Right cardiac atrium (tissue), 5 donors: ENCODE measurements at regions of chr22 and their contacts with region 1.

Region 1: DNA sequence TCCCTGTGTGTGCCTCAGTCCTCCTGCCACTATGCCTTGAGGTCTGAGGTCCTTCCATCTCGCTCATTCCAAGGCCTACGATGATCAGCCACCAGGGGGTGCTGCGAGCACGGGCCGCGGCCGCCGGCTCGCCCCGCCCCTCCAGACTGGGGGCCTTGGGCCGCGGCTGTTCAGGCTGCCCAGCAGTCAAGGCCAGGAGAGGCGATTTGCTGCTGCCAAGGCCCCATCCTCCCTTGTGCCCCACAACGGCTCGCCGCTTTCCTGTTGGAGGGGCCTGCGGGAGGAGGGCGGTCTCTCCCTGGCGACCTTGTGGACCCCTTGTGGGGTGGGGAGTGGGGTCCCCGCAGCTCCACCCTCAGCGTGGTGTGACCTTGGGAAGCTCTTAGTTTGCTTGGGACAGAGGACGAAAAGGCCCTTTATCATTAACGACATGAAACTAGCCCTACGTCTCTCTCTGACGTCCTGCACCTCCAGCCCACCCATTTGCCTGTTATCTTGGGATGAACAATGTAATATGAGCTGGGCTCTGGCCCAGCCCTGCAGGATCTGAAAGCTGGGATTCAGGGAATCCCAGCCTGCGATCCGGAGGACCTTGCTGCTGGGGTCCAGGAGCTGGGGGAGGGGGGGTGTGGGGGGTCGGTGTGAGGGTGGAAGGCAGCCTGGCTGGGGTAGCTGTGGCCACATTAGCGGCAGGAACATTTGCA is 5.3 kb upstream of the GALR3 start:
- DNase-seq: peak; percentile 80 to 94 (median 94)
- ATAC-seq: peak; percentile 92
- H3K4me3 ChIP-seq: peak overlapping the region; percentile 46
- H3K27ac ChIP-seq: no peak overlapping the region
- H3K4me1 ChIP-seq: peaks cover 4% of the 10 kb centered on the region
- H3K27me3 ChIP-seq: no peaks in the 10 kb centered on the region

Region 2: DNA sequence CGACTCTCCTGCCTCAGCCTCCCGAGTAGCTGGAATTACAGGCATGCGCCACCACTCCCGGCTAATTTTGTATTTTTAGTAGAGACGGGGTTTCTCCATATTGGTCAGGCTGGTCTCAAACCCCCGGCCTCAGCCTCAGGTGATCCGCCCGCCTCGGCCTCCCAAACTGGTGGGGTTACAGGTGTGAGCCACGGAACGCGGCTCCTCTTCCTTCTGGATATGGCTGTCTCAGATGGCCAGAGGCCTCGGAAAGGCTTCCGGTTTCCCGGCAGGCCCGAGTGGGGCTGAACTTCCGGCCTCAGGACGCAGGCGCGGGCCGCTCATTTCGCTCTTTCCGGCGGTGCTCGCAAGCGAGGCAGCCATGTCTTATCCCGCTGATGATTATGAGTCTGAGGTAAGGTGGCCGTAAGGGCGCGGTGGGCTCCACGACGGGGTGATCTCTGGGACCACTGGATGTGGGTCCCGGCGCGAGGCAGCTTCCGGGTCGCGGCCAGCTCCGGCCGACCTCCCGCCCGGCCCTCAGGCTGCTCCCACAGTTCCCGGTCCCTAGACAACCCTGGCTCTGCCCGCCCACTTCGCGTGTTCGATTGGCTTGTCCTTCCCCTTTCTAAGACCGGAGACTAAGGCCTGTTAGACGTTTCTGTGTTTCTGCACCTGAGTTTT is 31.4 kb after region 1 on chr22 and contains the start of gene EIF3L:
- intact Hi-C with region 1: loop called in 1 of 4 experiments (anchors 2 kb)
- DNase-seq: peak; percentile 90 to 95 (median 95)
- ATAC-seq: peak; percentile 92 to 94
- H3K4me3 ChIP-seq: peak within 1 kb of the TSS; percentile 88
- H3K27ac ChIP-seq: peak within 1 kb of the TSS; percentile 55
- H3K4me1 ChIP-seq: no peaks in the 10 kb centered on the region
- H3K27me3 ChIP-seq: no peaks in the 10 kb centered on the region
- total RNA-seq, gene EIF3L: 291 to 354 (median 334) TPM

Region 3: DNA sequence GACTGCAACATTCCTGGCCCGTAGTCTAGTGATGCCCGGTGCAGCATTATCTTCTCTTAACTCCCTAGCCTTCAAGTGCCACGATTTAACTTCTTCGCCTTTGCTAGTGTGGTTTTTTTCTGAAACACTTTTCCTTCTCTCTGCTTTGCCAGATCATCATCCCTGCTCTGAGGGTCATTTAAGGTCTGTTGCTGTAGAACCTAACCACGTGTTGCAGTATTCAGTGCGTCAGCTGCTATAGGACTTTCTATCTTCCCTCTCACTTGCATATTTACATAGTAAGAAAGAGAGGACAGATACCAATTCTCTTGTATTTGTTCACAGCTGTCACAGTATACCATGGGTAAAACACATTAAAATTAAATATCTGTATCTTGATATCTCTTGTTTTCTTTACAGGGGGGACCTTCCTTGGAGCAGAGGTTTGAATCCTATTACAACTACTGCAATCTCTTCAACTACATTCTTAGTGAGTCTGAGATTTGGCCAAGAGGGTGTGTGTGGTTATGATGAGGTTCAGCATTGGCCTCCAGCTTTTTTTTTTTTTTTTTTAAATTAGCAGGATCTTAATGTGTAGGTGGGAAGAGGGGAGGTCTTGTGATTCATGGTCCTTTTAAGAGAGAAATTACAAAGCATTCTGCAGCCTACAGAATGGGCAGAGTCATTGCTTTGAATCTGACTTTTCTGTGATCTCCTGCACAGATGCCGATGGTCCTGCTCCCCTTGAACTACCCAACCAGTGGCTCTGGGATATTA is 44.9 kb after region 1 on chr22:
- intact Hi-C with region 1: loop called (anchors 2 to 5 kb)
- DNase-seq: no peak
- ATAC-seq: no peak
- H3K4me3 ChIP-seq: no peak overlapping the region
- H3K27ac ChIP-seq: no peak overlapping the region
- H3K4me1 ChIP-seq: no peaks in the 10 kb centered on the region
- H3K27me3 ChIP-seq: no peaks in the 10 kb centered on the region

Region 4: DNA sequence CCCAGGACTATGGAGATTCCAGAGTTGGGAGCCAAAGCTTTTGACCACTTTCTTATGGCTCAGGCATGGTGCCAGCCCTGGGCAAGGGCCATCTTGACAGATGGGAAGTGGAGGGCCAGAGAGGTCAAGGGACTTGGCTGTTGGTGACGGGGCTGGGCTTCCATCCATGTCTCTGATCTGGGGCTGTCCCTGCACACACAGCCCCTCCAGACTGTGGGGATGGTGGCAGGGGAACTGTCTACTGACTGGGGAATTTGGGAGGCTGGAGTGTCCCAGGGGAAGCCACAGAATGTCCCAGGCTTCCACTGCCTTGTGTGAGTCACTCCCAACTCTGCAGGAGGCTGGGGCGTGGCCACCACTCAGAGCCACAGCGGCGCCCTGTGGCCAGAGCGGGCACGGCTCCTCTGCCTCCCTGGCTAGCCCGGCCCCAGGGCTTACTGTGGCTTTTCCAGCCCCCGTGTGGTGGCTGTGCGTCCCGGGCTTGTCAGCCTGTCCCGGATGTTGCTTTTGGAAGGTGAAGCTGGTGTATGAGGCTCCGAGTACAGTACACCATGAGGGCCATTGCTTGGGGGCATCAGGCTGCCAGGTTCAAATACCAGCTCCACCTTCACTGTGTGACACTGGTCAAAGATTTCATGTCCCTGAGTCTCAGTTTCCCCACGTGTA is 116.0 kb after region 1 on chr22:
- intact Hi-C with region 1: loop called in 1 of 4 experiments (anchors 10 kb)
- DNase-seq: peak; percentile 92 to 96 (median 96)
- ATAC-seq: peak; percentile 96 to 97
- H3K4me3 ChIP-seq: no peak overlapping the region
- H3K27ac ChIP-seq: peak overlapping the region; percentile 58
- H3K4me1 ChIP-seq: peaks cover 10% of the 10 kb centered on the region
- H3K27me3 ChIP-seq: no peaks in the 10 kb centered on the region

Region 5: DNA sequence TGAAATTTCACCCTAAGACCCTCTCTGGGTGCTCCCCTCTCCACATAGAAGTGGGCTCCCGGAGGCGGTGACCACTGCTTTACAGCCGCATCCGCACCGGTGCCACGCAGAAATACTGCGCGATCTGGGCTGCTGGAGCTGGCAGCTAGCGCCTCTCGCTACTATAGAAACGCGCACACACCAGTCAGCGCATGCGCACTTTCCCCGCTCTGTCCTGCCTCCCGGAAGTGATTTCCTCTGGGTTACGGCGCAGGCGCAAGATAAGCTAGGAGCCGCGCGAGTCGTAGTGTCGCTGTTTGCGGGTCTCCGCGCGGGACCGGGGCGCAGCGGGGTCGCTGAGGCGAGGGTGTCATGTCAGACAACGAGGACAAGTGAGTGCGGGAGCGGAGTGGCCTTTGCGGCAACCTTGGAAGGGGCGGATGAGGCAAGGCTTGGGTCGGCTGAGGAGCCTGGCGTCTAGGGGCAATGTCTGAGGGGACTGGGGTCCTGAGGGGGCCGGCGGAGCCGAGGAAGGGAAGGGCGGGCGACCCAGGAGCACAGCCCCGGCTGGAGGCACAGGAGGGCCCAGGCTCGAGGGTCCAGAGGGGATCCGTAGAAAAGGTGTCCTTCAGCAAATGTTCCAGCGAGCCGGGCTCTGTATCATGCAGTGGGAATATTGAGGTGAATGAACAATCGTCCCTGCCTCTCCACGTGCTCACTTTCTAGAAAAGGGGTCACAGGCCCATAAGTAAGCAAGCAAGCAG is 135.8 kb after region 1 on chr22 and contains the starts of genes C22orf23 and POLR2F:
- intact Hi-C with region 1: loop called in 1 of 4 experiments (anchors 10 kb)
- DNase-seq: peak; percentile 98 to 99 (median 98)
- ATAC-seq: peak; percentile 97
- H3K4me3 ChIP-seq: peak within 1 kb of the TSS; percentile 84
- H3K27ac ChIP-seq: peak within 1 kb of the TSS; percentile 7
- H3K4me1 ChIP-seq: peaks cover 3% of the 10 kb centered on the region
- H3K27me3 ChIP-seq: no peaks in the 10 kb centered on the region
- total RNA-seq, gene C22orf23: 0.19 to 0.46 (median 0.27) TPM
- total RNA-seq, gene POLR2F: 62.1 to 85.5 (median 76.9) TPM

Region 6: DNA sequence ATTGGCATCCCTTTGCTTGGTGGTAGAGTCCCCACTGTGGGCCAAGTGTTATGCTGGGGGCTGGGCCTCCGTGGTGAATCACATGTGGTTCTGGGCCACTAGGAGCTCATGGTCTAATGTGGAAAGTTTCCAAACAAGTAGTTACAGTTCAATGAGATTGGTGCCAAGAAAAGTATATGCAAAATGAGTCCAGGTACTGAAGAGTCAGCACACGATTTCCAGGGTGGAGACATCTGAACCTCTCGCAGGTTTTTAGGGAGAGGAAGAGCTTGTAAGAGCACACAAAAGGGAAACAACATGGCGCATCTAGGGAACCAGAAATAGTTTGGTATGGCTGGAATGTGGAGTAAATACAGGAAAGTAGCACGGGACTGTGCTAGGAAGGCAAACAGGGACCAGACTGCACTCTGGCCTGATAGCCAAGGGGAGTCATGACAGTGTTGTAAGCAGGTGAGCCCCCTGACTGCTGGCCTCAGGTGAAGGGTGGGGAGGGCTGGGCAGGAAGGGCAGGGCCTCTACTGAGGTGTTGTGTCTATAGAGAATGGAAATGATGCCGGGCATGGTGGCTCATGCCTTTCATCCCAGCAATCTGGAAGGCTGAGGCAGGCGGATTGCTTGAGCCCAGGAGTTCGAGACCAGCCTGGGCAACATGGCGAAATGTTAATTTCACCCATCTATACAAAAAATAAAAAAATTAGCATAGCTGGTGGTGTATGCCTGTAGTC is 148.2 kb after region 1 on chr22:
- intact Hi-C with region 1: loop called in 1 of 4 experiments (anchors 10 kb)
- DNase-seq: peak in 1 of 3 donors; percentile 14
- ATAC-seq: peak in 1 of 2 donors; percentile 27
- H3K4me3 ChIP-seq: no peak overlapping the region
- H3K27ac ChIP-seq: no peak overlapping the region
- H3K4me1 ChIP-seq: peaks cover 3% of the 10 kb centered on the region
- H3K27me3 ChIP-seq: no peaks in the 10 kb centered on the region